HCT116 (cell line): ENCODE measurements at regions of chr4 and their contacts with region 1.

Region 1: GRCh38 chr4:74228691-74229640 is 71.0 kb downstream of the MTHFD2L start:
- DNase-seq: peak; percentile 72
- ATAC-seq: peak; percentile 92
- H3K4me3 ChIP-seq: no peak overlapping the region
- H3K27ac ChIP-seq: no peak overlapping the region
- H3K4me1 ChIP-seq: peaks cover 3 to 35% of the 10 kb centered on the region in 2 experiments
- H3K27me3 ChIP-seq: no peaks in the 10 kb centered on the region
- CTCF ChIP-seq: peak; percentile 81 to 97 (median 89); a peak in 5 of 6 replicates
- POLR2A ChIP-seq: no peak
- RAD21 ChIP-seq: peak; percentile 87

Region 2: DNA sequence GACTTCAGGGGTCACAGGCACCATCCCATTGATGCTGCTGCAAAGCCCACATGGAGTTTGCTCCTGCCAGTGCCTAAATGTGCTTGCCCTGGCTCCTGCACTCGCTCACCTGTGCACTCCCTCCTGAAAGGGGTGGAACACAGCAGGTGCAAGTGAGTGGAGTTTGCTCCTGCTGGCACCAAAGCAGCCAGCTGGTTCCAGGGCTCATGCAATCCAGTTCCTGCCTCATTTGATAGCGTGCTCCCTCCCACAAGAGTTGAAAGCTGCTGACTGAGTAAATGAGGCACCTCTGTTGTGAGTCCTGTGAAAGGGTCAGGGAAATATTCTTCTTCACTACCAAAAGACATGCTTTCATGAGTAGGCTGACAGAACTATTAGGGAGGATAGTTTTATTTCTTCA is 458.0 kb before region 1 on chr4:
- CTCF ChIA-PET with region 1: no interaction called
- POLR2A ChIA-PET with region 1: no interaction called
- RAD21 ChIA-PET with region 1: no interaction called
- intact Hi-C with region 1: no loop called
- DNase-seq: no peak
- ATAC-seq: no peak
- H3K4me3 ChIP-seq: no peak overlapping the region
- H3K27ac ChIP-seq: no peak overlapping the region
- H3K4me1 ChIP-seq: no peaks in the 10 kb centered on the region
- H3K27me3 ChIP-seq: no peaks in the 10 kb centered on the region
- CTCF ChIP-seq: no peak
- POLR2A ChIP-seq: no peak
- RAD21 ChIP-seq: no peak

Region 3: DNA sequence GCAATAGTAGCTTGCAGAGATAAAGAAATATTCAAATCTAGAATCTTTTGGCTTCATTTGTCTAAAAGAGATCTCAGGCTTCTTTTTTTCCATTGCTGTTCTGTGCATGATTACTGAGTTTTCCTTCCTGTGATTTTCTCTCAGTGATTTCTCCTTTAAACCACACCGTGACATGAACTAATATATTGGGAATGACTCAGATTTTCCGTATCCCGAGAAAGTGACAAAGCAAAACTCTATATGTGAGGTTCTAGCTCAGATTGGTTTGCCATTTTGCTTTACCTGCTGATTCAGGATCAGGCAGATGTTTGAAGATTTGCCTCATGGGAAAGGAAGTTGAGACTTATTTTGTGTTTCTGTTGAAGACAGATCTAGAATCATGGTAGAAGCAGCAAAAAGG is 11.6 kb before region 1 on chr4:
- CTCF ChIA-PET with region 1: interaction called, 18 read pairs
- POLR2A ChIA-PET with region 1: no interaction called
- RAD21 ChIA-PET with region 1: no interaction called
- intact Hi-C with region 1: no loop called
- DNase-seq: no peak
- ATAC-seq: no peak
- H3K4me3 ChIP-seq: no peak overlapping the region
- H3K27ac ChIP-seq: no peak overlapping the region
- H3K4me1 ChIP-seq: peaks cover 2 to 31% of the 10 kb centered on the region in 2 experiments; a peak in 2 of 4 replicates
- H3K27me3 ChIP-seq: no peaks in the 10 kb centered on the region
- CTCF ChIP-seq: no peak
- POLR2A ChIP-seq: no peak
- RAD21 ChIP-seq: no peak

Region 4: GRCh38 chr4:74267998-74268606 is 39.1 kb after region 1 on chr4:
- CTCF ChIA-PET with region 1: interaction called, 5 read pairs
- POLR2A ChIA-PET with region 1: no interaction called
- RAD21 ChIA-PET with region 1: interaction called in 1 of 2 experiments, 3 read pairs
- intact Hi-C with region 1: loop called (anchors 5 kb)
- DNase-seq: peak; percentile 87
- ATAC-seq: peak; percentile 81
- H3K4me3 ChIP-seq: peak overlapping the region in 1 of 2 experiments; percentile 36; a peak in 2 of 4 replicates
- H3K27ac ChIP-seq: peak overlapping the region; percentile 90
- H3K4me1 ChIP-seq: peaks cover 20 to 48% of the 10 kb centered on the region in 2 experiments
- H3K27me3 ChIP-seq: no peaks in the 10 kb centered on the region
- CTCF ChIP-seq: no peak
- POLR2A ChIP-seq: no peak
- RAD21 ChIP-seq: no peak; the same call in 1 of the 2 replicates